ENCODE measurements at regions of chr11 and their contacts with region 1.

Region 1: GRCh38 chr11:116276051-116277044 is 496.4 kb downstream of the BUD13 start:
- DNase-seq: peak; percentile 67
- ATAC-seq: peak; percentile 97
- H3K4me3 ChIP-seq: peak overlapping the region; percentile 39 to 71 (median 43); a peak in 4 of 6 replicates
- H3K27ac ChIP-seq: no peak overlapping the region
- H3K4me1 ChIP-seq: peaks cover 6% of the 10 kb centered on the region; the same call in 1 of the 2 replicates
- H3K27me3 ChIP-seq: no peaks in the 10 kb centered on the region; a peak in 1 of 5 replicates
- CTCF ChIP-seq: peak; percentile 92
- EP300 ChIP-seq: no peak
- POLR2A ChIP-seq: no peak
- RAD21 ChIP-seq: peak; percentile 93

Region 2: DNA sequence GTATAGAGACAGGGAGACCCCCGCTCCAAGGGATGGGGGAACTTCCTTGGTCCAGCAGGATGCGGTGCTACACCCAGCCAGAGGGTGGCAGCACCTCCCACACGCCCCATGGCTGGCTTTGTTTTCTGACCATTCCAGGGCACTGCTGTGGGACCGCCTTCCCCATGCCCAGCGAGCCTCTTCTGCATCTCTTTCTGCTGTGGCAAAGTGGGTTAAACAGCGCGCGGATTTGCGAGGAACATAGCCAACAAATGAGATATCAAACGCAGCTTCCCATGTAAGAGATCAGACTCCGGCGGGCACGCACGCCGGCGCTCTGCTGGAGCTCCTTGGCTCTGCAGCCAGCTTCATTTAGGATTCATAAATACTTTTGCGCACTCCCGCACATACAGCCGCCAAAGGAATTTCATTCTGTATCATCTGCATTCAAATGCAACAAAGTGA is 286.3 kb before region 1 on chr11:
- CTCF ChIA-PET with region 1: no interaction called
- POLR2A ChIA-PET with region 1: no interaction called
- in situ Hi-C with region 1: no loop called
- intact Hi-C with region 1: loop called (anchors 2 kb)
- DNase-seq: no peak
- ATAC-seq: peak; percentile 84
- H3K4me3 ChIP-seq: no peak overlapping the region
- H3K27ac ChIP-seq: no peak overlapping the region
- H3K4me1 ChIP-seq: no peaks in the 10 kb centered on the region
- H3K27me3 ChIP-seq: no peaks in the 10 kb centered on the region; a peak in 1 of 5 replicates
- CTCF ChIP-seq: peak; percentile 69
- EP300 ChIP-seq: no peak
- POLR2A ChIP-seq: no peak
- RAD21 ChIP-seq: no peak